PC-3 (cell line): ENCODE measurements at regions of chr10 and their contacts with region 1.

Region 1: GRCh38 chr10:72048450-72049124 is 39.8 kb downstream of the SPOCK2 start:
- DNase-seq: peak; percentile 96
- ATAC-seq: peak; percentile 82
- H3K4me3 ChIP-seq: no peak overlapping the region
- H3K27ac ChIP-seq: no peak overlapping the region
- H3K4me1 ChIP-seq: no peaks in the 10 kb centered on the region; the same call in 1 of the 2 replicates
- H3K27me3 ChIP-seq: no peaks in the 10 kb centered on the region
- CTCF ChIP-seq: peak; percentile 98

Region 2: GRCh38 chr10:71812016-71812912 is 236.3 kb before region 1 on chr10:
- CTCF ChIA-PET with region 1: no interaction called
- POLR2A ChIA-PET with region 1: no interaction called
- intact Hi-C with region 1: no loop called
- DNase-seq: peak; percentile 60
- ATAC-seq: peak; percentile 77
- H3K4me3 ChIP-seq: no peak overlapping the region
- H3K27ac ChIP-seq: no peak overlapping the region
- H3K4me1 ChIP-seq: no peaks in the 10 kb centered on the region
- H3K27me3 ChIP-seq: no peaks in the 10 kb centered on the region
- CTCF ChIP-seq: peak; percentile 84

Region 3: DNA sequence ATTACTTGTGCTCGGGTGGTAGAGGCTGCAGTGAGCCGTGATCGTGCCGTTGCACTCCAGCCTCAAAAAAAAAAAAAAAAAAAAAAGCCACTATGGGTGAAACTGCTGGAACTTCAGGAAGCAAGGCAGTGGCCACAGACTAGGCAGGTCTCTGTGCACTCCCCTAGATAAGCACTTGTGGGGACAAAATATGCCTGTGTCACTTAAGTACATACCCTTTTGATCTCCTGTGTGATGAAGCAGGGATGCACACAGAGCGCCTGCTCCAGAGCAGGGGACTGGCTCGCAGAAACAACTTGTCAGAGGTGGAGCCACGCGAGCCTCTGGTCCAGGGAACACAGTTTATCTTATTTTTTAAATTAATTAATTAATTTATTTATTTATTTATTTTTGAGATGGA is 154.7 kb before region 1 on chr10:
- CTCF ChIA-PET with region 1: interaction called, 23 read pairs
- POLR2A ChIA-PET with region 1: no interaction called
- intact Hi-C with region 1: loop called (anchors 1 kb)
- DNase-seq: no peak
- ATAC-seq: no peak
- H3K4me3 ChIP-seq: no peak overlapping the region
- H3K27ac ChIP-seq: no peak overlapping the region
- H3K4me1 ChIP-seq: peaks cover 5% of the 10 kb centered on the region
- H3K27me3 ChIP-seq: no peaks in the 10 kb centered on the region
- CTCF ChIP-seq: no peak

Region 4: GRCh38 chr10:71921324-71922027 is 127.1 kb before region 1 on chr10:
- CTCF ChIA-PET with region 1: interaction called, 6 read pairs
- POLR2A ChIA-PET with region 1: no interaction called
- intact Hi-C with region 1: loop called (anchors 5 kb)
- DNase-seq: no peak
- ATAC-seq: peak; percentile 31
- H3K4me3 ChIP-seq: no peak overlapping the region; the same call in 1 of the 2 replicates
- H3K27ac ChIP-seq: peak overlapping the region; percentile 67
- H3K4me1 ChIP-seq: peaks cover 24% of the 10 kb centered on the region
- H3K27me3 ChIP-seq: no peaks in the 10 kb centered on the region
- CTCF ChIP-seq: no peak

Region 5: GRCh38 chr10:71957546-71958275 is 90.9 kb before region 1 on chr10:
- CTCF ChIA-PET with region 1: interaction called, 19 read pairs
- POLR2A ChIA-PET with region 1: interaction called, 5 read pairs
- intact Hi-C with region 1: loop called (anchors 1 kb)
- DNase-seq: no peak
- ATAC-seq: no peak
- H3K4me3 ChIP-seq: no peak overlapping the region
- H3K27ac ChIP-seq: no peak overlapping the region
- H3K4me1 ChIP-seq: peaks cover 6% of the 10 kb centered on the region
- H3K27me3 ChIP-seq: no peaks in the 10 kb centered on the region
- CTCF ChIP-seq: peak; percentile 19; the same call in 1 of the 2 replicates

Region 6: DNA sequence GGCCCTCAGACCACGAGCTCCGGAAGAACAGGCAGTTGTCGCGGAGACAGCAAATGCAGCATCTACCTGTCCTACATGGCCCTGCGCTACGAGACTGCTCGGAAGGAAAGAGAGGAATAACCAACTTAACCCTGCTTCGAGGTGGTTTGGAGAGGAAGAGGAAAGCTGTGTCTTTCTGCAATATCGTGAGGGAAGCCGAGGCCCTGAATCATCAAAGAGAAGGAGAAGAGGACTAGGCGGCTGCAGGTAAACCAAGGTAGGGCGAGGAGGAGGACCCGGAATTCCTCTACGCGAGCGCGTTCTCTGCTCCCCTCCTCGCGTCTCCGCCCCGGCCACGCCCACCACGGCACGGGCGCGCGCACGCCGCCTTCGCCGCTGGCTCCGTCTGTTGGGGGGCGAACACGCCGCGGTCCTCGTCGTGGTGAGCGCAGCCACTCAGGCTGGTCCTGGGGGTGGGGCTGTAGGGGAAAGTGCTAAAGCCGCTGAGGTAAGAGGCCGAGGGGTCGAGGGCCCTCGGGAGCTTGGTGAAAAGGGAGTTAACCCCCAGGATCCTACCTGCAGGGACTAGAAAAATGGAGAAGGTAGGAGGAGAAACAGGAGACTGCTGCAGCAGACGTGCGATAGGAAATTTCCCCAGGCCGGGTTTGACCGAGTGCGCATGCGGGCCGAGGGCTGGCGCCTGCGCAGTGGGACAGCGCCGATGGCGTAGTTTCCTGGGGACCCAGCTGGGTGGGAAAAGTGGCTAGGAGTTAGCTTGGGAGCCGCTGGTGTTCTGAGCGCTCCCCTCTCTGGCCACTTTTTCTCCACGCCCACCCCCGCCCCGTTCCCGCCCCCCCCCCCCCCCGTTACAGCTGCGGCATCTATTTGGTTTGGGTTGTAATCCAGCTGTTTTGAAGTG is 167.3 kb after region 1 on chr10 and contains the starts of genes ANAPC16 and ASCC1:
- CTCF ChIA-PET with region 1: interaction called, 13 read pairs
- POLR2A ChIA-PET with region 1: no interaction called
- intact Hi-C with region 1: no loop called
- DNase-seq: peak; percentile 88
- ATAC-seq: peak; percentile 85
- H3K4me3 ChIP-seq: peak within 1 kb of the TSS; percentile 98
- H3K27ac ChIP-seq: peak within 1 kb of the TSS; percentile 96
- H3K4me1 ChIP-seq: peaks cover 19% of the 10 kb centered on the region; the same call in 1 of the 2 replicates
- H3K27me3 ChIP-seq: no peaks in the 10 kb centered on the region
- CTCF ChIP-seq: no peak
- total RNA-seq, gene ANAPC16: 19.2 and 23.9 TPM in 2 replicates
- total RNA-seq, gene ASCC1: 15.7 and 24.3 TPM in 2 replicates

Region 7: DNA sequence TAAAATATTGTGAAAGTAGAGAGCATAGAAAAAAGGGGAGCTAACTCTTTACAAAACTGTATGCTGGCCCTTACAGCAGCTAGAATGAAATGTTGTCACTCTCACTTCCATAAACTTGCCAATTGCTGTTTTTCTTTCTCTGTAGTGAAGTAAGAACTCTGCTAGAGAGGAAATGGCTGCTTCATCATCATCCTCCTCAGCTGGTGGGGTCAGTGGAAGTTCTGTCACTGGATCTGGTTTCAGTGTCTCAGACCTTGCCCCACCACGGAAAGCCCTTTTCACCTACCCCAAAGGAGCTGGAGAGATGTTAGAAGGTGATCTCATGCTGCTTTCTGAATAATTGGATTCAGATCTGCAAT is 175.1 kb after region 1 on chr10:
- CTCF ChIA-PET with region 1: no interaction called
- POLR2A ChIA-PET with region 1: no interaction called
- intact Hi-C with region 1: loop called (anchors 2 kb)
- DNase-seq: no peak
- ATAC-seq: no peak
- H3K4me3 ChIP-seq: no peak overlapping the region
- H3K27ac ChIP-seq: no peak overlapping the region
- H3K4me1 ChIP-seq: no peaks in the 10 kb centered on the region
- H3K27me3 ChIP-seq: no peaks in the 10 kb centered on the region
- CTCF ChIP-seq: no peak